ENCODE measurements at regions of chr2 and their contacts with region 1.

Region 1: DNA sequence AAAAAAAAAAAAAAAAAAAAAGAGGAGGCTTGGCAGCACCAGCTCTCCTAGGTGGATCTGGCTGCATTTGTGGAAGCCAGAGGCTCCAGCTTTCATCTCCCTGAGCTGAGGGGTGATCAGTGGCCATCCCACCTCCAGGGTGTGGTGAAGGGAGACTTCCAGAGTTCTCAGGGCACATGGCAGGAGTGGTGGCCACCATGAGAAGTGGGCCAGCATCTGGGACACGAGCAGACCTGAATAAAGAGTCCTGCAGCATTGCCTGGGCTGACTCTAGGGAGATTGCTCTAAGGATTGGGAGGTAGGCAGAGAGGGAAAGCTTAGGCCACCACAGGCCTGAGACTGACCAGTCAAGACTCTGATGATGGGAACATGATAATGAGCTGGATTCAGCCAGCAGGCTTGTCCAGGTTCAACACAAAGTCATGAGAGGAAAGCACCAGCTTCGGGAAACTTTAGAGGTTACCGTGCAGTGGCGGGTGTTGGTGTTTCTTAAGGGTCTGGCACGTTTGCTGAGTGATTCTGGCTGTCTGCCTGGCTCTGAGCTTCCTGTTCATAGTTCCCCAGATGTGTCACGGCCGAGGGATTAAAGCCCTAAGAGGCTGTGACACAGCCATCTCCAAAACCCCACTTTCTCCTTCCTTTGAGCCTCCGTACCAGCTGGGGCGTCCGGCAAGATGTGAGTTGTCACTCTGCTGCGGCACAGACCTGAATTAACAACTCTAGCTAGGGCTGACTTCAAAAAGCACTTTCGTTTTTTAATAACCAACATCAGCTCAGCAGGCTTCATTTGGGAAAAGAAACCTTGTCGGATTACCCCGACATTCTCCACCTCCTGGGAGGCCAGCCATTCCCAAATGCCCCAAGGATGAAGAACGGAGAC is 38.3 kb upstream of the IL1R1 start:
- DNase-seq: peak; percentile 92
- H3K4me3 Mint-ChIP-seq: peak overlapping the region; percentile 81
- H3K27ac Mint-ChIP-seq: peak overlapping the region; percentile 86
- H3K4me1 Mint-ChIP-seq: peaks cover 50% of the 10 kb centered on the region
- H3K27me3 Mint-ChIP-seq: peaks cover 12% of the 10 kb centered on the region

Region 2: GRCh38 chr2:102126651-102127050 is 22.4 kb after region 1 on chr2:
- CTCF ChIA-PET with region 1: no interaction called
- POLR2A ChIA-PET with region 1: interaction called, 4 read pairs
- intact Hi-C with region 1: loop called (anchors 1 kb)
- DNase-seq: no peak
- H3K4me3 Mint-ChIP-seq: no peak overlapping the region
- H3K27ac Mint-ChIP-seq: peak overlapping the region; percentile 90
- H3K4me1 Mint-ChIP-seq: peaks cover 38% of the 10 kb centered on the region
- H3K27me3 Mint-ChIP-seq: peaks cover 12% of the 10 kb centered on the region

Region 3: GRCh38 chr2:102138331-102138730 is 34.1 kb after region 1 on chr2:
- CTCF ChIA-PET with region 1: interaction called, 5 read pairs
- POLR2A ChIA-PET with region 1: interaction called, 6 read pairs
- intact Hi-C with region 1: loop called (anchors 1 kb)
- DNase-seq: no peak
- H3K4me3 Mint-ChIP-seq: no peak overlapping the region
- H3K27ac Mint-ChIP-seq: peak overlapping the region; percentile 70
- H3K4me1 Mint-ChIP-seq: peaks cover 59% of the 10 kb centered on the region
- H3K27me3 Mint-ChIP-seq: peaks cover 24% of the 10 kb centered on the region